A673 (cell line): ENCODE measurements at regions of chr12 and their contacts with region 1.

Region 1: DNA sequence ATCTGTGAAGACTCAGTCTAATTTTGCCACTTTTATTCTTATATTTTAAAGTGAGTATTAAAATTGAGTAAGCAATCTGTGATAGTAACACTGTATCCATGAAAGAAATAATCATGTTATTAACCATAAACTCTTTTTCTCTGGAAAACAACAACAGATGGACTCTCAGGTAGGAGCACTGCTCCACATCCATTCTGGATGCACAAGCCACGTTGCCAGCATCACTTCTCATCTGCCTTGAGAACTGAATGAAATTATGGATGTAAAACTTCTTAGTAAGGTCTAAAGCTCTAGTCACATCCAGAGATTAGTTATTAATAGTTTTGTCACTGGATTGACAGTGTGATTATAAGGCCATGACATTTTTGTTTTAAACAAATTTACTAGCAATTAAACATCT is 489.1 kb upstream of the SYT1 start:
- DNase-seq: no peak
- H3K4me3 ChIP-seq: no peak overlapping the region
- H3K27ac ChIP-seq: no peak overlapping the region
- H3K4me1 ChIP-seq: no peaks in the 10 kb centered on the region
- H3K27me3 ChIP-seq: no peaks in the 10 kb centered on the region
- CTCF ChIP-seq: no peak

Region 2: DNA sequence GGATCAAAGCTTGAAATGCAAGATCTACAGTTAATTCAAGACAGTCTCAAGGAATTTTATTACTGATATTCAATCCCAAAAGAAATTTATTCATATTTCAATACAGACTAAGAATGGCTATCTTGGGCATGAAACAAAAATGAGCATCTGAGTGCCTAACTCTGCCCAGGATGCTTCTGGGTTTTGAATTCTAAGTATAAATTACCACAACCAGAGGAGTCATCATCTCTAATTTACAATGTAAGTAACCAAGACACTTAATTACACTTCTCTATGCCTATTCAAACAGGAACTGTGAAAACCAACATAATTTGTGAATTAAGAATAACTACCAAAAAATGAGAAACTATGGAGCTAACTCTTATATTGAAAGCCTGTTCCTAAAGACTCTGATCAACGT is 1830.0 kb before region 1 on chr12:
- CTCF ChIA-PET with region 1: no interaction called
- POLR2A ChIA-PET with region 1: interaction called, 11 read pairs
- intact Hi-C with region 1: no loop called
- DNase-seq: no peak
- H3K4me3 ChIP-seq: no peak overlapping the region
- H3K27ac ChIP-seq: no peak overlapping the region
- H3K4me1 ChIP-seq: peaks cover 33% of the 10 kb centered on the region
- H3K27me3 ChIP-seq: no peaks in the 10 kb centered on the region
- CTCF ChIP-seq: no peak

Region 3: DNA sequence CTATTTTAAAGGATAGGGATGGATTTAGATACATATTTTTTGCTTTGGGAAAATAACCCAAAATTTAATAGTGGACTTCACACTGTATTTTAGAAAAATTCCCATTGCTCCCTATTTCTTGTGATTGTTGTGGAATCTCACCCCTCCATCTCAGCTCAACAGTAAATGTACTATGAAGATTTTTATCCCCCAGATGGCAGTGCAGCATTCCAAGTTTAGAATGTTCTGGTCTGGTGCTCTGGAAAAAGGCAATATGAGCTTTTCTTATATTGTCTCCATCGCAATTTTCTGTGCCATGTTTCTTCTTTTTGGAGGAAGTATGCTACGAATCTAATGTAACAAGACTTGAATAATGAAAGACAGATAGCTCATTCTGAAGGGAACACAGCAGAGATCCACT is 17.5 kb after region 1 on chr12:
- CTCF ChIA-PET with region 1: no interaction called
- POLR2A ChIA-PET with region 1: interaction called, 12 read pairs
- intact Hi-C with region 1: no loop called
- DNase-seq: peak; percentile 77
- H3K4me3 ChIP-seq: no peak overlapping the region
- H3K27ac ChIP-seq: no peak overlapping the region
- H3K4me1 ChIP-seq: peaks cover 8% of the 10 kb centered on the region
- H3K27me3 ChIP-seq: no peaks in the 10 kb centered on the region
- CTCF ChIP-seq: peak; percentile 57